ENCODE measurements at regions of chr2 and their contacts with region 1.

Region 1: DNA sequence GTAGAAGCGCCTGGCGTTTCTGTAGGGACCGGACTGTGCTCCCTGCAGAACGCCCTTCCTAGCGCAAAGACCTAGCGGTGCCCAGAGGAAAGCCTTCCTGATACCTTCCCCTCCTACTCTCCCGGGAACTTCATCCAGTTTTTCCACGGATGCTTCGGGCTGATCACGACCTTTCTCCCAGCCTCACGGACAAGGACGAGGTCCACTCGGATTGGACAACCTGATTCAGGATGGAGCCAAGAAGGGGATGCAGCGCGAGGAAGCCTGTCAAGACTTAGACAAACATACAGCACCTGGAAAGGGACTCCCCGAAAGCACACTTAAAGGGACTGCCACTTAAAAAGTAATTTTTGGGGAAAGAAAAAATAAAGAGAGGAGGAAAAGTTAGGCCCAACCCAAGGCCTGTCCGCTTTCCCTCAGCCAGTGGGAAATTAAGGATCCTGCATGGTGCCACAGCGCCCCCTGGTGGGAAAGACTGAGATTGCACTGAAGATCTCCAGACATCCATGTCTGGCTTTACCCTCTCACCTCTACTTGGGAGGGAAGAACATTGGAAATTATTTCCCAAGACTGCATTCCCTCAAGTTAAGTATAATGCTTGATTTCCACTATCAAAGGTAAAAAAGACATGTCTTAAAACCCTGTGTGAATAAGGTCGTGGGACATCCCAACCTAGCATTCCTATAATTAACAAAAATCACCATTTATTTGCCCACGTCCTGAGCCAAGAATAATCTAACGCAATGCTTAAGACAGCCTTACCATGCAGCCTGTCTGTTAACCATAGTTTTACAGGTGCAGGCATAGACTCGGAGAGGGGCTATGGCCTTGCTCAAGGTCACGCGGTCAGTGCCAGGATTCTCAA is 13.4 kb upstream of the COPS8 start:
- DNase-seq: peak in 1 of 2 donors; percentile 88
- H3K4me3 ChIP-seq: no peak overlapping the region
- H3K27ac ChIP-seq: peak overlapping the region in 1 of 2 donors; percentile 70
- H3K4me1 ChIP-seq: peaks cover 0 to 13% of the 10 kb centered on the region in 2 donors
- H3K27me3 ChIP-seq: no peaks in the 10 kb centered on the region
- CTCF ChIP-seq: peak; percentile 84 to 97 (median 96)

Region 2: DNA sequence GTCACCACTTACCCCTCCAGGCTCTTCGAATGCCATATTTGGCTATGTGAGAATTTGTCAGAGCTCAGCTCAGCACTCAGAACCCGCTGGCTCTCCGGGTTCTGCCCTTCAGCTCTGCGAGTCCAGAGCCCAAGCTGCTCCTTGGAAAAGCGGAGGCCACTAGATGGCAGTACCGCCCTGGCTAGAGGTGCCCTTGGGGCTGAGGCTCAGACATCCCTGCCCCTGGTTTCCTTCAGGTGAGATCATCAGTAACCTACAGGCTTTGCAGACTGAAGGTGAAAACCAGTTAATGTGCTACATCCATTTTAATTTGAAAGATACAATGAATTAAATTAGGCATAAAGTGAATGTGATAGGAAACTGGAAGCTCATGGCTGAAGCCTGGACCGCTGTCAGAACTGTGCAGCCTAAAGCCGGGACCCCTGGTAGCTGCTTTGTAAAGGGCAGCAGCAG is 1292.8 kb before region 1 on chr2:
- intact Hi-C with region 1: loop called (anchors 10 kb)
- DNase-seq: peak in 1 of 2 donors; percentile 69
- H3K4me3 ChIP-seq: no peak overlapping the region
- H3K27ac ChIP-seq: no peak overlapping the region
- H3K4me1 ChIP-seq: no peaks in the 10 kb centered on the region
- H3K27me3 ChIP-seq: no peaks in the 10 kb centered on the region
- CTCF ChIP-seq: peak in 2 of 3 experiments; percentile 43 to 70

Region 3: DNA sequence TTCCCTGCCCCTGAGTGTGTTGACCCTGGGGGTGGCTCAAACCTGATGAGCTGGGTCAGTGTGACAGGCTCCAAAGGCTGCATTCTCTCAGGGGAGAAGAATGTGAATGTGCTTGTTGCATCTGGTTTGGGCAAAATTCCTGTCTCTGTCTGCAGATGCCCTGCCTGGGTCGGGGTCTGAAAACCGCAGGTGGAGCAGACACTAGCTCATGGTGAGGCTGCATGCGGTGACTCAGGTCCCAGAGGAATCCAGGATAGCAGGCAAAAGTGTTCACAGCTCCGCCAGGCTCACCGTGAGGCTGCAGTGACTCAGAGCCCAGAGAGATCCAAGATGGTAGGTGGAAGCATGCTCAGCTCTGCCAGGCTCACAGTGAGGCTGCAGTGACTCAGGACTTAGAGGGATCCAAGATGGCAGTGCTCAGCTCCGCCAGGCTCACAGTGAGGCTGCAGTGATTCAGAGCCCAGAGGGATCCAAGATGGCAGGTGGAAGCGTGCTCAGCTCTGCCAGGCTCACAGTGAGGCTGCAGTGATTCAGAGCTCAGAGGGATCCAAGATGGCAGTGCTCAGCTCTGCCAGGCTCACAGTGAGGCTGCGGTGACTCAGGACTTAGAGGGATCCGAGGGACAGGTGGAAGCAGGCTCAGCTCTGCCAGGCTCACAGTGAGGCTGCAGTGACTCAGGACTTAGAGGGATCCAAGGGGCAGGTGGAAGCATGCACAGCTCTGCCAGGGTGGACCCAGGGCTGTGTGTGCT is 302.2 kb before region 1 on chr2:
- intact Hi-C with region 1: no loop called
- DNase-seq: peak in 1 of 2 donors; percentile 44
- H3K4me3 ChIP-seq: no peak overlapping the region
- H3K27ac ChIP-seq: no peak overlapping the region
- H3K4me1 ChIP-seq: no peaks in the 10 kb centered on the region
- H3K27me3 ChIP-seq: no peaks in the 10 kb centered on the region
- CTCF ChIP-seq: no peak

Region 4: GRCh38 chr2:237026981-237027711 is 45.2 kb before region 1 on chr2:
- intact Hi-C with region 1: no loop called
- DNase-seq: peak; percentile 38 to 83
- H3K4me3 ChIP-seq: no peak overlapping the region
- H3K27ac ChIP-seq: no peak overlapping the region
- H3K4me1 ChIP-seq: no peaks in the 10 kb centered on the region
- H3K27me3 ChIP-seq: no peaks in the 10 kb centered on the region
- CTCF ChIP-seq: peak; percentile 71 to 86 (median 80)

Region 5: GRCh38 chr2:237039301-237040031 is 32.8 kb before region 1 on chr2:
- intact Hi-C with region 1: no loop called
- DNase-seq: no peak
- H3K4me3 ChIP-seq: no peak overlapping the region
- H3K27ac ChIP-seq: no peak overlapping the region
- H3K4me1 ChIP-seq: no peaks in the 10 kb centered on the region
- H3K27me3 ChIP-seq: no peaks in the 10 kb centered on the region
- CTCF ChIP-seq: no peak

Region 6: GRCh38 chr2:237113026-237113795 is 40.9 kb after region 1 on chr2:
- intact Hi-C with region 1: no loop called
- DNase-seq: no peak
- H3K4me3 ChIP-seq: no peak overlapping the region
- H3K27ac ChIP-seq: no peak overlapping the region
- H3K4me1 ChIP-seq: no peaks in the 10 kb centered on the region
- H3K27me3 ChIP-seq: no peaks in the 10 kb centered on the region
- CTCF ChIP-seq: no peak